Activated B cell treated with CpG ODN at 0.5 μM for 24 hours (primary cell): ENCODE measurements at regions of chr12 and their contacts with region 1.

Region 1: GRCh38 chr12:52121824-52122539 is 42.5 kb downstream of the SMIM41 start:
- DNase-seq: peak; percentile 56
- ATAC-seq: no peak
- H3K4me3 Mint-ChIP-seq: no peak overlapping the region
- H3K27ac Mint-ChIP-seq: no peak overlapping the region
- H3K4me1 Mint-ChIP-seq: peaks cover 48% of the 10 kb centered on the region
- H3K27me3 Mint-ChIP-seq: peaks cover 11% of the 10 kb centered on the region
- CTCF ChIP-seq: no peak

Region 2: DNA sequence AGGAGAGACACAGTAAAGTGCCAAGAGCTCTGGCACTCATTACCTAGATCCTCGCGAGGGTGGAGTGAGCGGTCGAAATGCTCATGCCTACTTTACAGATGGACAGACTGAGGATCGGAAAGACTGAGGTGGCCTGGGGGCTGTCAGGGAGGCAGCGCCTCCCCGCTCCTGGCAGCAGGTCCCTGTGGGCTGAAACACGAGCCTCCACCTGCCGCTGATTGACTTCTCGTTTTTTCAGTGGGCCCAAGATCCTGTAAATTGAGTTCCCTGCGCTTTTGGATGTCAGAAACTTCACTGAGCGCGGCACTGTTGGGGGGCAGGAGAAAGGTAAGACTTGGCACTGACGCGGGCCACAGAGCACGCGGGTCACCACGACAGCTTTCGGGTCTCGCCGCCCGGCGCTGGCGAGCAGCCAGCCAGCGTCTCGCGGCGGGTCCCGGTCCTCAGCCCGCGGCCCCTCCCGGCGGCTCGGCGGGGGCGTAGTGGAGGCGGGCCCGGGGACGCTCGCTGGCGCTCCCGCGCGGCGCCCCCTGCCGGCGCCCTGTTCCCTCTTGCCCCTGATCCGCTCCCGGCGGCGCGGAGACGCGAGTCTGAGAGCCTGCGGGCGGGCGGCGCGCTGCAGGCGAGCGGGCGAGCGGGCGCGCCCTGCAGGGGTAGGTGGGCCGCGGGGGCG is 531.5 kb before region 1 on chr12:
- CTCF ChIA-PET with region 1: no interaction called
- POLR2A ChIA-PET with region 1: no interaction called
- intact Hi-C with region 1: loop called (anchors 5 kb)
- DNase-seq: peak; percentile 75
- ATAC-seq: peak; percentile 88
- H3K4me3 Mint-ChIP-seq: peak overlapping the region; percentile 88
- H3K27ac Mint-ChIP-seq: peak overlapping the region; percentile 56
- H3K4me1 Mint-ChIP-seq: peaks cover 18% of the 10 kb centered on the region
- H3K27me3 Mint-ChIP-seq: peaks cover 32% of the 10 kb centered on the region
- CTCF ChIP-seq: no peak

Region 3: DNA sequence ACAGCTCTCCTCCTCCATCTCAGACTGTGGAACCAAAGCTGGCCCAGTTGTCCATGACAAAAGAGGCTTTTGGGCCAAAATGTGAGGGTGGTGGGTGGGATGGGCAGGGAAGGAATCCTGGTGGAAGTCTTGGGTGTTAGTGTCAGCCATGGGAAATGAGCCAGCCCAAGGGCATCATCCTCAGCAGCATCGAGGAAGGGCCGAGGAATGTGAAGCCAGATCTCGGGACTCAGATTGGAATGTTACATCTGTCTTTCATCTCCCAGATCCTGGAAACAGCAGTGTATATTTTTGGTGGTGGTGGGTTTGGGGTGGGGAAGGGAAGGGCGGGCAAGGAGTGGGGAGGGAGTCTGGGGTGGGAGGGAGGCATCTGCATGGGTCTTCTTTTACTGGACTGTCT is 127.0 kb before region 1 on chr12:
- CTCF ChIA-PET with region 1: interaction called, 8 read pairs
- POLR2A ChIA-PET with region 1: interaction called, 3 read pairs
- intact Hi-C with region 1: loop called (anchors 1 kb)
- DNase-seq: no peak
- ATAC-seq: no peak
- H3K4me3 Mint-ChIP-seq: no peak overlapping the region
- H3K27ac Mint-ChIP-seq: no peak overlapping the region
- H3K4me1 Mint-ChIP-seq: peaks cover 3% of the 10 kb centered on the region
- H3K27me3 Mint-ChIP-seq: no peaks in the 10 kb centered on the region
- CTCF ChIP-seq: no peak

Region 4: DNA sequence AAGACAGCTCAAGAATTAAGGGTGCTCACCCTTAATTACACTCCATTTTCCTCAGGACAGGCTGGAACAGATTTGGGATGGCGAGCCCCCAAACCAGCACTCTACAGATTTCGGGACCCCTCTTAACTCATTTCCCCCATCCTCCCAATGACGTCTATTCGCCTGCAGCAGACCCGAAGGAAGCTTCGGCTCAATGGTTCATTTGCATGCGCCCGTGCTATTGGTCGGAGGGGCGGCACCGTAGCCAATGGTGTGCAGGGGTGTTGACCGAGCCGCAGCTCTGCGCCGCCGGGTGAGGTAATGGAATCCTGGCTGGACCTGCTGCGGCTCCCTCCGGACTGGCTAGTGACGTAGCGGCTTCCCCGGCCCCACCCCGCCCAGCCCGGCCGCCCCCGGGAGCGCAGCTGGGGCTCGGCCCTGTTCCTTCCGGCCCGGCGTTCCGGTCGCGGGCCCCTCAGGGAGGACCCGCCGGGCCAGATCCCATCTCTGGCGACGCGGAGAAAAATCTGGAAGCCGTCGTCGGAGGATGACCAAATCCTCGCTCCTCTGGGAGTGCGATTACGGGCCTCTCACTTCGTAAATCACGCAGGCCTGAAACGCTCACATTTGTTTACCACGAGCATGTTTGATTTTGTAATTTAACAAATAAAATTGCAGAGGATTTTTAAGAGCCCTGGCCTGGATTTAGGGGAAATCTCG is 89.0 kb before region 1 on chr12:
- CTCF ChIA-PET with region 1: interaction called, 191 read pairs
- POLR2A ChIA-PET with region 1: interaction called, 15 read pairs
- intact Hi-C with region 1: loop called (anchors 2 kb)
- DNase-seq: peak; percentile 82
- ATAC-seq: peak; percentile 84
- H3K4me3 Mint-ChIP-seq: peak overlapping the region; percentile 77
- H3K27ac Mint-ChIP-seq: peak overlapping the region; percentile 88
- H3K4me1 Mint-ChIP-seq: peaks cover 44% of the 10 kb centered on the region
- H3K27me3 Mint-ChIP-seq: no peaks in the 10 kb centered on the region
- CTCF ChIP-seq: no peak

Region 5: GRCh38 chr12:52069327-52070184 is 52.4 kb before region 1 on chr12 and contains the start of gene ATG101:
- CTCF ChIA-PET with region 1: interaction called, 10 read pairs
- POLR2A ChIA-PET with region 1: interaction called, 7 read pairs
- intact Hi-C with region 1: loop called (anchors 1 kb)
- DNase-seq: peak; percentile 87
- ATAC-seq: peak; percentile 94
- H3K4me3 Mint-ChIP-seq: peak within 1 kb of the TSS; percentile 87
- H3K27ac Mint-ChIP-seq: peak within 1 kb of the TSS; percentile 96
- H3K4me1 Mint-ChIP-seq: peaks cover 47% of the 10 kb centered on the region
- H3K27me3 Mint-ChIP-seq: no peaks in the 10 kb centered on the region
- CTCF ChIP-seq: peak; percentile 31
- total RNA-seq, gene ATG101: 25.6 and 32.5 TPM in 2 replicates